IMR-90 (cell line): ENCODE measurements at regions of chr11 and their contacts with region 1.

Region 1: DNA sequence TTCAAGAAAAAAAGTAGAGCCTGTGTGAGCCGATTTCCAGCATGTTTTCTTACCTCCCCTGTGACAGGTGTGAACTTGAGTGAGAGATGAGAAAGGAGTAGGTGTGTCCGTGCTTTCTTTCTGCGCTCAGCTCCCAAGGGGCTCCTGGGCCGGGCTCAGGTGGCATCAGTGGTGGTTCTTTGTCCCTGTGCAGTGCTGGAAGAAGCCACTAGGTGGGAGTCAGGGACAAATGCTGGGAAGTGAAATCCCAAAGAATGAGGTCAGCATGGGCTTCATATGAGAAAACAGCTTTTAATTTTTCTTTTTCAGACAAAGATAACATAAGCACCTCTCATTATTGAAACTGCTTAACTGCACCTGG is 57.8 kb downstream of the PPFIBP2 start:
- DNase-seq: peak; percentile 69
- ATAC-seq: peak; percentile 79
- H3K4me3 ChIP-seq: no peak overlapping the region
- H3K27ac ChIP-seq: peak overlapping the region; percentile 73
- H3K4me1 ChIP-seq: peaks cover 38% of the 10 kb centered on the region
- H3K27me3 ChIP-seq: peaks cover 15% of the 10 kb centered on the region
- CTCF ChIP-seq: peak; percentile 97
- POLR2A ChIP-seq: no peak
- RAD21 ChIP-seq: peak; percentile 97

Region 2: GRCh38 chr11:7098235-7098832 is 473.3 kb before region 1 on chr11:
- CTCF ChIA-PET with region 1: no interaction called
- POLR2A ChIA-PET with region 1: no interaction called
- dilution Hi-C with region 1: no loop called
- in situ Hi-C with region 1: no loop called
- intact Hi-C with region 1: loop called (anchors 1 kb)
- DNase-seq: peak; percentile 46
- ATAC-seq: peak; percentile 83
- H3K4me3 ChIP-seq: no peak overlapping the region
- H3K27ac ChIP-seq: no peak overlapping the region
- H3K4me1 ChIP-seq: no peaks in the 10 kb centered on the region
- H3K27me3 ChIP-seq: no peaks in the 10 kb centered on the region; the same call in 1 of the 2 replicates
- CTCF ChIP-seq: peak; percentile 77
- POLR2A ChIP-seq: no peak
- RAD21 ChIP-seq: peak; percentile 85

Region 3: DNA sequence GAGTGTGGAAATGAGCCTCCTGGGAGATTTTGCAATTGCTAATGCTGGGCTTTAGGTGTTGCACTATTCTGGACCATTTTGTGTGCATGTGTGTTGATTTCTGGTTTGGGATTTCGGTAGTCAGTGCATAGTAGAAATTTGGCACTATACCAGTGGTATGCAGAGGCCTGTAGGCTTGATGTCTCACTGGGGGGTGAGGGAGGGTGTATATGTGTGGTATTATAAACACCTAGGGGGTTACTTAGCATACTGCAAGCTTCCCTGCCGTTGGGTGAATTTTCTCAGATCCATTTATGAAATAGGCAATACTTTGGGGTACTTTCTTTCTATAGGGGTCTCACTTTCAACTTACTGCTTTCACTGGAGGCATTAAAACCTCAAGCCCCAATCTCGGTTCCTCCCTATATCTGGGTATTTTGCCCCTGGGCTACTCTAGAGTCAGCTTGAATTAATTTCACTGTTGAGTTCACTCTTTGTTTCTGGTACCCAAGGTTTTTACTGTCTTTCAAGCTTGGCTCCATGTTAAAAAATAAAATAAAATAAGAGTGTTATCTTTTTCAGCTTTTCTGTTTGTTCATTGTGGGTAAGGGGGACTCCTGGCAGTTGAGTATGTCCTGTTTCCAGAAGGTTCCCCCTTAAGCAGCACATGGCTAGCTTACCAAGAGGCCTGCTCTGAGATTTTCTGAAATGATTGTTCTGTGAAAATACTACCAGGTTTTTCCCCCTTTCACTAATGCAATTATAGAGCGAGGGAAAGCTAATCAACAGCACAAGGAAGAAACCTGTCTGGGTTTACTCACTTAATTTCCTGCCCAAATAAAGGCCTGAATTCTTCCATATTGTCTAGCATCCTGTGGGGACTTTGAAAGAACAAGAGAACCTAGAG is 12.0 kb before region 1 on chr11:
- CTCF ChIA-PET with region 1: interaction called, 16 read pairs
- POLR2A ChIA-PET with region 1: no interaction called
- dilution Hi-C with region 1: no loop called
- in situ Hi-C with region 1: no loop called
- intact Hi-C with region 1: no loop called
- DNase-seq: no peak
- ATAC-seq: no peak
- H3K4me3 ChIP-seq: no peak overlapping the region
- H3K27ac ChIP-seq: no peak overlapping the region
- H3K4me1 ChIP-seq: no peaks in the 10 kb centered on the region
- H3K27me3 ChIP-seq: peaks cover 6% of the 10 kb centered on the region; the same call in 1 of the 2 replicates
- CTCF ChIP-seq: no peak
- POLR2A ChIP-seq: no peak
- RAD21 ChIP-seq: no peak

Region 4: GRCh38 chr11:7657306-7658025 is 85.8 kb after region 1 on chr11:
- CTCF ChIA-PET with region 1: interaction called, 59 read pairs
- POLR2A ChIA-PET with region 1: interaction called, 5 read pairs
- dilution Hi-C with region 1: no loop called
- in situ Hi-C with region 1: loop called (anchors 5 kb)
- intact Hi-C with region 1: loop called (anchors 2 kb)
- DNase-seq: peak; percentile 68
- ATAC-seq: peak; percentile 100
- H3K4me3 ChIP-seq: no peak overlapping the region
- H3K27ac ChIP-seq: no peak overlapping the region
- H3K4me1 ChIP-seq: no peaks in the 10 kb centered on the region
- H3K27me3 ChIP-seq: no peaks in the 10 kb centered on the region
- CTCF ChIP-seq: peak; percentile 75
- POLR2A ChIP-seq: no peak
- RAD21 ChIP-seq: peak; percentile 84

Region 5: DNA sequence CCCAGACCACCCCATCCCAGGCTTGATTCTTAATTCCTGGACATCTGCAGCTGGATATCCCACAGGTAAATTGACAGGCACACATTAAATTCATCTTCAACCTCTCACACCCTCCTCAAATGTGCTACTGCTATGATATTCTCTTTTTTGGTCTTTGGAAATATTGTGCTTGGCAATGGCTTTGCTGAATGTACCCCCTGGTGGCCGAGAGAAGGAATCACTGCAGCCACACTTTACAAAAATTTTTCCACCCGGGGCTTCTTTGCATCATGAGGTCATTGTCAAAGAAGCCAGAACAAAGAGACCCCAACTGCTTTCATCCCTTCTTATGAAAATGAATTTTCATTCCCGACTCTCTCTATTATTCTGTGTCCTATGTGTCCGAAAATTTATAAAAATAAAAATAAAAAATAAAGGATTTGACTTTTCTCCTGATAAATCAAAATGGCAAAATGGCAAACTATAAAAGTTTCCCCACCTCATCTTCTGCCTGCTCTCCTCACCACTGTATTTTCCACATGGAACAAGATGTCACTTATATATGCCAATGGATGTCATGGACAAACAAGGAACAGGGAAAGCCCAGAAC is 116.7 kb after region 1 on chr11:
- CTCF ChIA-PET with region 1: interaction called, 8 read pairs
- POLR2A ChIA-PET with region 1: no interaction called
- dilution Hi-C with region 1: no loop called
- in situ Hi-C with region 1: loop called (anchors 10 kb)
- intact Hi-C with region 1: loop called (anchors 1 kb)
- DNase-seq: peak; percentile 31
- ATAC-seq: peak; percentile 82
- H3K4me3 ChIP-seq: no peak overlapping the region
- H3K27ac ChIP-seq: no peak overlapping the region
- H3K4me1 ChIP-seq: 0 out of 2 replicates have a peak, but pooled peaks cover 2% of the 10 kb centered on the region
- H3K27me3 ChIP-seq: peaks cover 17% of the 10 kb centered on the region
- CTCF ChIP-seq: peak; percentile 77
- POLR2A ChIP-seq: no peak
- RAD21 ChIP-seq: peak; percentile 60

Region 6: DNA sequence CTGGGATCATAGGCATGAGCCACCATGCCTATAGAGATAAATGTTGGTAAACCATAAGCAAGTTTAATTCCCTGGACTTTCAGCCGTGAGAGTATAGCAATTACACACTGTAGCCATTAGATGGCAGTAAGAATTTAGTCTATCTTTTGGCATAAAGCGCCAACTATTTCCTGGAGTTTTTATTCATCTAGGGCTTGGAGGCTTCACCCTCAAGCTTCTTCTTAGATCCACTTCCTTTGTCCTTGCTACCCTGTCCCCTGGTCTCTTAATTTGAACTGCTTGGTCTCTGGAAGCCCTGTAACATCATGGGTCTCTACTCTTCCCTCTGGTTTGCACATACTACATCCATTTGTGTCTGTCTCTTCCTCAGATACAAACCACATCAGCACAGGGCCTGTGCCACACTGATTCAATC is 321.2 kb after region 1 on chr11:
- CTCF ChIA-PET with region 1: no interaction called
- POLR2A ChIA-PET with region 1: no interaction called
- dilution Hi-C with region 1: no loop called
- in situ Hi-C with region 1: loop called (anchors 25 kb)
- intact Hi-C with region 1: loop called (anchors 10 kb)
- DNase-seq: peak; percentile 74
- ATAC-seq: peak; percentile 89
- H3K4me3 ChIP-seq: no peak overlapping the region
- H3K27ac ChIP-seq: peak overlapping the region; percentile 55; the same call in 1 of the 2 replicates
- H3K4me1 ChIP-seq: peaks cover 9% of the 10 kb centered on the region
- H3K27me3 ChIP-seq: no peaks in the 10 kb centered on the region
- CTCF ChIP-seq: peak; percentile 77
- POLR2A ChIP-seq: no peak
- RAD21 ChIP-seq: peak; percentile 73